Activated CD4-positive, alpha-beta T cell treated with anti-CD3 and anti-CD28 coated beads for 36 hours (primary cell): ENCODE measurements at regions of chr19 and their contacts with region 1.

Region 1: DNA sequence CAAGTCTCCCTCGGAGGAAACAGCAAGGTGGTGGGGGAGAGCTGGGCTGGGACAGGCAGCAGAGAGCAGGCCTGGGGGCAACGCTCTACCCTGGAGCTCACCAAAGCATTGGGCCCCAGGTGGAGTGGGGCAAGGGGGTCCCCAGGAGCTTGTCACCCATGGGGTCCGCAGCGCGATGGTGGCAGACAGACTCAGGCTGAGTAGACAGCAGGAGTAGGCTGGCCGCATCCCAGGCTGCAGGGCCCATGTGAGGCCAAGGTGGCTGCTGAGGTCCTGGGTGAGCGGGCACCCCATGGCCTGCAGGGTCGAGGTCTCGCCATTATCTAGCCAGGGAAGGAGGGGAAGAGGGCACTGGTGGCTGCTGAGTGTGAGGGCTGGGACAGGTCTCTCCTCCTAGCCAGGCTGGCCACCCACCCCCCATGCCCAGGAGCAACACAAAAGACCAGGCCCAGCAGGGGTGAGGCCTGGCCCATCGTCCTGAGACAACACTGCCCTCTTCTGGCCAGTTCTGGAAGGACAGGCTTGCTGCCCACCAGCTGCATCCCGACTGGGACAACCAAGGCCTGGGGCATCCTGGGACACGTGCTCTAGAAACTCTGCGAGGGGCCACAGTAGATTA is 33.1 kb downstream of the CEBPG start:
- DNase-seq: peak; percentile 85
- ATAC-seq: peak; percentile 85
- H3K4me3 Mint-ChIP-seq: no peak overlapping the region
- H3K27ac Mint-ChIP-seq: no peak overlapping the region
- H3K4me1 Mint-ChIP-seq: no peaks in the 10 kb centered on the region
- H3K27me3 Mint-ChIP-seq: no peaks in the 10 kb centered on the region

Region 2: GRCh38 chr19:33125929-33126388 is 280.7 kb before region 1 on chr19:
- CTCF ChIA-PET with region 1: interaction called, 13 read pairs
- POLR2A ChIA-PET with region 1: no interaction called
- intact Hi-C with region 1: loop called in 1 of 2 experiments (anchors 2 kb)
- DNase-seq: peak; percentile 76
- ATAC-seq: peak; percentile 96
- H3K4me3 Mint-ChIP-seq: no peak overlapping the region
- H3K27ac Mint-ChIP-seq: no peak overlapping the region
- H3K4me1 Mint-ChIP-seq: peaks cover 4% of the 10 kb centered on the region
- H3K27me3 Mint-ChIP-seq: no peaks in the 10 kb centered on the region

Region 3: DNA sequence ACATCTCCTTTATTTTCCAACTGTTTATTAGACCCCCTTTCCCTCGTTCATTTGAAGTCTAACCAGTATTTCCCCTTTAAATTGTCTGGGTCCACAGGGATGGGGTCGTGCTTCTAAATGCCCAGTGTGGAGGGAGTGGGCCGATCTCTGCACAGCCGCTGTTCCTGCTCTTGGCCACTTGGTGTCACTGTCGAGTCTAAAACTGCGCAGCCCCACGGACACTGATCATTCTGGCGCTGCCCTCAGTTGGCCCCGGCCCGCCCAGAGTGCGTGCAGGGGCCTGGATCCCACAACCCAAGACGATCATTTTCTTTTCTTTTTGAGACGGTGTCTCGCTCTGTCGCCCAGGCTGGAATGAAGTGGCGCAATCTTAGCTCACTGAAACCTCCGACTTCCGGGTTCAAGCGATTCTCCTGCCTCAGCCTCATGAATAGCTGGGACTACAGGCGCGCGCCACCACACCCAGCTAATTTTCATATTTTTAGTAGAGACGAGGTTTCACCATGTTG is 262.7 kb before region 1 on chr19:
- CTCF ChIA-PET with region 1: interaction called, 5 read pairs
- POLR2A ChIA-PET with region 1: no interaction called
- intact Hi-C with region 1: loop called (anchors 5 to 10 kb)
- DNase-seq: peak; percentile 80
- ATAC-seq: peak; percentile 99
- H3K4me3 Mint-ChIP-seq: peak overlapping the region; percentile 1
- H3K27ac Mint-ChIP-seq: no peak overlapping the region
- H3K4me1 Mint-ChIP-seq: peaks cover 4% of the 10 kb centered on the region
- H3K27me3 Mint-ChIP-seq: no peaks in the 10 kb centered on the region